ENCODE measurements at regions of chr12 and their contacts with region 1.

Region 1: GRCh38 chr12:19439059-19440018 is at the start of gene AEBP2:
- DNase-seq: peak; percentile 88
- ATAC-seq: peak; percentile 81
- H3K4me3 Mint-ChIP-seq: peak within 1 kb of the TSS; percentile 92
- H3K27ac Mint-ChIP-seq: peak within 1 kb of the TSS; percentile 97
- H3K4me1 Mint-ChIP-seq: peaks cover 39% of the 10 kb centered on the region
- H3K27me3 Mint-ChIP-seq: no peaks in the 10 kb centered on the region
- CTCF ChIP-seq: no peak
- total RNA-seq, gene AEBP2: 59.6 to 63.3 TPM

Region 2: DNA sequence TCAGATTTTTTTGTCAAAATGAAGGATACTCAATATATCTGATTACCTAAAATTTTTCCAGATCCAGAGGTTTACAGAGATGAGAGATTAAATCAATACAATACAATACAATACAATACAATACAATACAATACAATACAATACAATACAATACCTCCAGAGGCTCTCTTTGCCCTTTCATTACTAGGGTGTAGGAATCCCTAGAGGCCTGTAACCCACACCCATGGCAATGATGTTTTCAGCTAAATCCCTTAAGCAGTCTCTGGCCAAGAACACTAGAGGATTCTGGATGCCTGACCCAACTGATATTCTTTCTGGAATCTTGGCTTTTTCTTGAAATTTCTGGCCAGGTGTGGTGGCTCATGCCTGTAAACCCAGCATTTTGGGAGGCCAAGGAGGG is 23.8 kb before region 1 on chr12:
- CTCF ChIA-PET with region 1: no interaction called
- POLR2A ChIA-PET with region 1: no interaction called
- intact Hi-C with region 1: no loop called
- DNase-seq: no peak
- ATAC-seq: no peak
- H3K4me3 Mint-ChIP-seq: no peak overlapping the region
- H3K27ac Mint-ChIP-seq: no peak overlapping the region
- H3K4me1 Mint-ChIP-seq: no peaks in the 10 kb centered on the region
- H3K27me3 Mint-ChIP-seq: no peaks in the 10 kb centered on the region
- CTCF ChIP-seq: no peak

Region 3: DNA sequence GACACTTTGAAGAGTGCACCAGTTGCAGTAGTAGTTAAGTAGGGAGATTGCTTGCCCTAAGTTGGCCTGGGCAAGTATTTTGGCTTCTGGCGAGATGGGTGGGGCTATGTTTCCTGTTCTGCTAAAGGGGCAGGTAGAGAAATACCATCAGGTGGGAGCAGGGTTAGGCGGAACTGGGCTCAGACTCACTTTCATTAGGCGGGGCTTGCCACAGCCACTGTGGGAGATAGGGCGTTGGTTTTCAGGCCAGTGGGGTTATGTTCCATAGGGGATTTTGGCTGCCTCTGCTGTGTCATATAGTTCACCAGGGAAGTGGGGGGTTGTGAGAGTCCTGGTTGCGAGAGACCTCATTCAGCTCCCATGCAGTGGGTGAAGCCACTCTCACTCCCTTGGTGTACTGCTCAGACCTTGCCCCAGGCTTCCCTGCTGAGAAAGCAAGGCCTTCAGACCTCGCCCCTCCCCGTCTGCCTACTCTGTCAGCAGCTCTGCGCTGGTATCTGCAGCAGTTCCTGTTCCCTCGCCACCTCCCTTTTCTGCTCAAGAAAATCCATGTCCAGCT is 43.3 kb after region 1 on chr12:
- CTCF ChIA-PET with region 1: no interaction called
- POLR2A ChIA-PET with region 1: interaction called, 5 read pairs
- intact Hi-C with region 1: loop called (anchors 5 kb)
- DNase-seq: peak; percentile 87
- ATAC-seq: peak; percentile 92
- H3K4me3 Mint-ChIP-seq: peak overlapping the region; percentile 38
- H3K27ac Mint-ChIP-seq: peak overlapping the region; percentile 85
- H3K4me1 Mint-ChIP-seq: peaks cover 72% of the 10 kb centered on the region
- H3K27me3 Mint-ChIP-seq: no peaks in the 10 kb centered on the region
- CTCF ChIP-seq: no peak

Region 4: DNA sequence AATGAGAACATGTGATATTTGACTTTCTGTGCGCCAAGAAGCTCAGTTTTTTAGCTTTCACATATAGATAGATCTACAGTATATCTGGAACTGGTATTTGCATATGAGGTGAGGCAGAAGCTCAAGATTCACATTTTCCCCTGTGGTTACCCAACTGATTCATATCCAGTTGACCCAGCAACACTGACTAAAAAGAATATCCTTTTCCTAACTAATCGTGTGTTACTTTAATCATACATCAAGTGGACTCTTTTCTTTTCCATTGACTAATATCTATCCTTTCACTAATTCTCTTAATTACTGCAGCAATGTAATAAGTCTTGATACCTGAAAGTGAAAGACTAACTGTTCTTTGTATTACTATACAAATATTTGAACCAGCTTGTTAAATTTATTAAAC is 236.0 kb after region 1 on chr12:
- CTCF ChIA-PET with region 1: no interaction called
- POLR2A ChIA-PET with region 1: interaction called, 6 read pairs
- intact Hi-C with region 1: loop called (anchors 10 kb)
- DNase-seq: peak; percentile 36
- ATAC-seq: peak; percentile 95
- H3K4me3 Mint-ChIP-seq: no peak overlapping the region
- H3K27ac Mint-ChIP-seq: peak overlapping the region; percentile 87
- H3K4me1 Mint-ChIP-seq: peaks cover 51% of the 10 kb centered on the region
- H3K27me3 Mint-ChIP-seq: no peaks in the 10 kb centered on the region
- CTCF ChIP-seq: no peak

Measured in activated CD8-positive, alpha-beta T cell treated with anti-CD3 and anti-CD28 coated beads for 36 hours (primary cell).